ENCODE measurements at regions of chr4 and their contacts with region 1.

Region 1: DNA sequence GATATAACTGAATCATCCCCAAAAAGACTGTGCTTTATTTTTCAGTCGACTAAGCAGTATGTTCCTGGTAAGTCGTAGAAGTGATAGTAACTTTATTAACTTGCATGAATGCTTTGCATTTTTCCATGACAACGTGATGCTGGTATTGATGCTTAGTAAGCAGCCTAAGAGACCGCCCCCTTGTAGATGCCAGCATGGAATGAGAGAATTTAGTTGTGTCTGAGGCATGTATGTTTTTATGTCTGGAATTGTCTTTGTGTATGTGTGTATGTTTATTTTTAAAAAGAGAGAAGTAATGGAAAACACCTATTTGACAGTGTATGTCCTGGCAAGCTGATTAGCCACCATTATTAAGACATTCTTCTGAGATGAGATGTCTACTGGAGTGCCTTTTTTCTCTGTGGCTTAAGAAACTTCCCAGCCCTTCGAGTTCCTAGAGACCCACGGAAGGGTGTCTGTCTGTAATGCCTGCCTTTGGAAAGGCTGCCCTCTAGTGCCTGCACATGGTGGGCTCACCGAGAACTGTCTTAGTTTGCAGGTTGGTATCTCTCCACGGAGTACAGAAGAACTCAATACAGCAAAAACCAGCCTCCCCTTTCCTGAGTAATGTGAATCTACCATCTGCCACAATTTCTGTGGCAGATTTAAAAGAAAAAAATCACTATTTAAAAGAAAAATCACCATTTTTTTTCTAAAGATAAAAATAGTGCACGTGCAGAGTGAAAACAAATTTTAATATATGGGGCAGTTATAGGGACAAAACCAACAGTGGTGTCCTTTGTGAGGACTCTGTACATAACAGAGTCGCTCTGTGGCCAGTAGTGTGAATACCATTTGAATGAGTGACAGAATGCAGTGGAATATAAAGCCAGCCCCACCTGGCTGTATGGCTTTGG is 85.9 kb downstream of the AASDH start:
- DNase-seq: peak; percentile 59
- ATAC-seq: peak; percentile 99
- H3K4me3 ChIP-seq: no peak overlapping the region
- H3K27ac ChIP-seq: no peak overlapping the region
- H3K4me1 ChIP-seq: peaks cover 0 to 18% of the 10 kb centered on the region in 2 experiments; a peak in 3 of 4 replicates
- H3K27me3 ChIP-seq: no peaks in the 10 kb centered on the region
- CTCF ChIP-seq: peak; percentile 86 to 95 (median 94)
- POLR2A ChIP-seq: no peak
- RAD21 ChIP-seq: peak; percentile 96

Region 2: GRCh38 chr4:55866973-55867574 is 434.4 kb before region 1 on chr4:
- CTCF ChIA-PET with region 1: no interaction called
- POLR2A ChIA-PET with region 1: no interaction called
- RAD21 ChIA-PET with region 1: no interaction called
- intact Hi-C with region 1: loop called (anchors 10 kb)
- DNase-seq: peak; percentile 51
- ATAC-seq: peak; percentile 87
- H3K4me3 ChIP-seq: no peak overlapping the region
- H3K27ac ChIP-seq: peak overlapping the region; percentile 49; the same call in 1 of the 2 replicates
- H3K4me1 ChIP-seq: peaks cover 12 to 26% of the 10 kb centered on the region in 2 experiments
- H3K27me3 ChIP-seq: no peaks in the 10 kb centered on the region
- CTCF ChIP-seq: peak; percentile 33 to 79 (median 78); a peak in 5 of 6 replicates
- POLR2A ChIP-seq: no peak
- RAD21 ChIP-seq: peak; percentile 76

Region 3: DNA sequence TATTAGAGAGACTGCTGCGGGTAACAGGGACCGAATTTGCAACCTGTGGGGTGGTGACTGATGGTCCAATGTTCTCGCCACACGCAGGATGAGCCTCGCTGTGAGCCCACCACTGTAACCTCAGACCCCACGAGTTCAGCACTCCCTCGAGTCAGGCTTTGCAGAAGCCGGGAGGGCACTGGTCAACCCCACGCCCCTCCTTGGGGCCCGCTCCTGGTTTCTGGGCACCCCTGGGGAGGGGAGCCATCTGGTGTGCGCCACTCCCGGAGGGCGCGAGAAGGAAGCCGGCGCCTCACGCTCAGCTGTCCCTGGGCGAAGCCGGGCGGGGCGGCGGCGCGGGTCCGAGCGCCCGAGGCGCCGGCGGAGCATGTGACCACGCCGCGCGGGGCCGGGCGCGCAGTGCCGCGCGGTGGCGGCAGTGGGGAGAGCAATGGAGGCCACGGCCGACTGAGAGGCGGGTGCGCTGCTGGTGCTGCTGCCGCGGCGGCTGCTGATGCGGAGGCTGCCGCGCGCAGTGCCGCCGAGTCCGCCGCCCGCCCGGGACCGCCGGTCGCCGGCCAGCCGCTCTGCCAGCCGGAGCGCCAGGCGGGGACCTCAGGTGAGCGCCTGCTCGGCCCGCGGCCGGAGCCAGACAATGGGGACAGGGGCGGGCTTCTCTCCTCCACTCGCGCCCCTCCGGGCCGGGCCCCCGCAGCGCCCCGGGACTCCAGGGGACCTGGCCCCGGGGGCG is 252.6 kb before region 1 on chr4:
- CTCF ChIA-PET with region 1: no interaction called
- POLR2A ChIA-PET with region 1: no interaction called
- RAD21 ChIA-PET with region 1: no interaction called
- intact Hi-C with region 1: loop called (anchors 1 kb)
- DNase-seq: peak; percentile 29
- ATAC-seq: peak; percentile 89
- H3K4me3 ChIP-seq: peak overlapping the region; percentile 67 to 77
- H3K27ac ChIP-seq: peak overlapping the region; percentile 88
- H3K4me1 ChIP-seq: peaks cover 7 to 16% of the 10 kb centered on the region in 2 experiments; a peak in 3 of 4 replicates
- H3K27me3 ChIP-seq: no peaks in the 10 kb centered on the region
- CTCF ChIP-seq: peak in 1 of 3 experiments; percentile 35; a peak in 2 of 6 replicates
- POLR2A ChIP-seq: peak; percentile 48
- RAD21 ChIP-seq: peak; percentile 33

Region 4: GRCh38 chr4:56129431-56129861 is 172.0 kb before region 1 on chr4:
- CTCF ChIA-PET with region 1: no interaction called
- POLR2A ChIA-PET with region 1: no interaction called
- RAD21 ChIA-PET with region 1: no interaction called
- intact Hi-C with region 1: loop called (anchors 1 kb)
- DNase-seq: peak; percentile 79
- ATAC-seq: peak; percentile 99
- H3K4me3 ChIP-seq: no peak overlapping the region
- H3K27ac ChIP-seq: peak overlapping the region; percentile 37; the same call in 1 of the 2 replicates
- H3K4me1 ChIP-seq: peaks cover 13 to 26% of the 10 kb centered on the region in 2 experiments
- H3K27me3 ChIP-seq: no peaks in the 10 kb centered on the region
- CTCF ChIP-seq: peak; percentile 86 to 91 (median 90)
- POLR2A ChIP-seq: no peak
- RAD21 ChIP-seq: peak; percentile 89

Region 5: GRCh38 chr4:56475917-56476316 is 174.5 kb after region 1 on chr4:
- CTCF ChIA-PET with region 1: no interaction called
- POLR2A ChIA-PET with region 1: no interaction called
- RAD21 ChIA-PET with region 1: no interaction called
- intact Hi-C with region 1: no loop called
- DNase-seq: no peak
- ATAC-seq: no peak
- H3K4me3 ChIP-seq: no peak overlapping the region
- H3K27ac ChIP-seq: no peak overlapping the region
- H3K4me1 ChIP-seq: no peaks in the 10 kb centered on the region
- H3K27me3 ChIP-seq: no peaks in the 10 kb centered on the region
- CTCF ChIP-seq: no peak
- POLR2A ChIP-seq: no peak
- RAD21 ChIP-seq: no peak

Measured in HCT116 (cell line).